HEK293T (cell line): ENCODE measurements at regions of chr11 and their contacts with region 1.

Region 1: DNA sequence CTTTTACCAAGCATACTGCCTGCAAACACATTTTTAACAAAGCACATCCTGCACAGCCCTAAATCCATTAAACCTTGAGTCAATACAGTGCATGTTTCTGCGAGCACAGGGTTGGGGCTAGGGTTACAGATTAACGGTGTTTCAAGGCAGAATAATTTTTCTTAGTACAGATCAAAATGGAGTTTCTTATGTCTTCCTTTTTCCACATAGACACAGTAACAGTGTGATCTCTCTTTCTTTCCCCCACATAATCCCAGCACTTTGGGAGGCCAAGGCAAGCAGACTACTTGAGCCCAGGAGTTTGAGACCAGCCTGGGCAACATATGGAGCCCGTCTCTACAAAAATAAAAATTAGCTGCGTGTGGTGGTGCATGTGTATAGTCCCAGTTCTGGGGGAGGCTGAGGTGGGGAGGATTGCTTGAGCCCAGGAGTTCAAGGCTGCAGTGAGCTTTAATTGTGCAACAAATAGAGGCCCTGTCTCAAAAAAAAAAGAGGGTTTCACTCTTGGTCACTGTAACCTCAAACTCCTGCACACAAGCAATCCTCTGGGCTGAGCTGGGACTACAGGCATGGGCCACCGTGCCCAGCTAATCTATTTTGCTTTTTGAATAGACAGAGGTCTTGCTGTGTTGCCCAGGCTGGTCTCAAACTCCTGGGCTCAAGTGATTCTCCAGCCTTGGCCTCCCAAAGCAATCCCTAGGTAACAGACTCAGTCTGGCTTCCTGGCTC is 19.7 kb upstream of the SLC3A2 start:
- DNase-seq: no peak

Region 2: GRCh38 chr11:62880803-62881578 is 20.0 kb after region 1 on chr11 and contains the start of gene SLC3A2:
- CTCF ChIA-PET with region 1: interaction called, 6 read pairs
- POLR2A ChIA-PET with region 1: interaction called, 87 read pairs
- DNase-seq: peak; percentile 82

Region 3: GRCh38 chr11:62948765-62949320 is 87.8 kb after region 1 on chr11:
- CTCF ChIA-PET with region 1: no interaction called
- POLR2A ChIA-PET with region 1: no interaction called
- DNase-seq: no peak

Region 4: DNA sequence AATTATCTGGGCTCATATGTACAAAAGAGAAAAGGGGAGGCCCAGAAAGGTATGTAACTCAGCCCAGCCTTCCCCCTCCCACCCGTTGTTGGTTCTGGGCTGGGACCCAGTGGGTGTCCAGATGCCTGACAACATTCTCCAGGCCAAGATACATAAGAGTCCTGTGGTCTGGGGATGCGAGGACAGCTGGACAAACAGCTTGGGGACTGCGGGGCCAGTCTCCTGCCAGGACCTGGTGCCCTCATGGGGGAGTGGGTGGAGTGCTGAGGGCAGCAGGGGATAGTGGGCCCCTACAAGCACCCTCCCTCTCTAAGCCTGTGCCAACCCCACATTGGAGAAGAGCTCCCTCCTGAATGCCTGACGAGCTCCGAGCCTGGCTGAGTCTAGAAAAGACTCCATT is 127.3 kb after region 1 on chr11:
- CTCF ChIA-PET with region 1: no interaction called
- POLR2A ChIA-PET with region 1: no interaction called
- DNase-seq: no peak

Region 5: GRCh38 chr11:63504933-63505586 is 644.1 kb after region 1 on chr11:
- CTCF ChIA-PET with region 1: no interaction called
- POLR2A ChIA-PET with region 1: no interaction called
- DNase-seq: no peak